ENCODE measurements at regions of chr6 and their contacts with region 1.

Region 1: GRCh38 chr6:24910961-24911712 is 24.6 kb downstream of the RIPOR2 start:
- DNase-seq: peak; percentile 65
- ATAC-seq: peak; percentile 76
- H3K4me3 ChIP-seq: peak overlapping the region; percentile 75
- H3K27ac ChIP-seq: peak overlapping the region; percentile 73
- H3K4me1 ChIP-seq: peaks cover 22% of the 10 kb centered on the region
- H3K27me3 ChIP-seq: peaks cover 5% of the 10 kb centered on the region
- CTCF ChIP-seq: no peak
- POLR2A ChIP-seq: no peak
- RAD21 ChIP-seq: no peak

Region 2: GRCh38 chr6:24899997-24900325 is 11.2 kb before region 1 on chr6:
- CTCF ChIA-PET with region 1: interaction called, 11 read pairs
- POLR2A ChIA-PET with region 1: no interaction called
- dilution Hi-C with region 1: no loop called
- in situ Hi-C with region 1: no loop called
- intact Hi-C with region 1: no loop called
- DNase-seq: no peak
- ATAC-seq: no peak
- H3K4me3 ChIP-seq: no peak overlapping the region
- H3K27ac ChIP-seq: no peak overlapping the region
- H3K4me1 ChIP-seq: peaks cover 9% of the 10 kb centered on the region
- H3K27me3 ChIP-seq: no peaks in the 10 kb centered on the region
- CTCF ChIP-seq: no peak
- POLR2A ChIP-seq: no peak
- RAD21 ChIP-seq: no peak

Region 3: DNA sequence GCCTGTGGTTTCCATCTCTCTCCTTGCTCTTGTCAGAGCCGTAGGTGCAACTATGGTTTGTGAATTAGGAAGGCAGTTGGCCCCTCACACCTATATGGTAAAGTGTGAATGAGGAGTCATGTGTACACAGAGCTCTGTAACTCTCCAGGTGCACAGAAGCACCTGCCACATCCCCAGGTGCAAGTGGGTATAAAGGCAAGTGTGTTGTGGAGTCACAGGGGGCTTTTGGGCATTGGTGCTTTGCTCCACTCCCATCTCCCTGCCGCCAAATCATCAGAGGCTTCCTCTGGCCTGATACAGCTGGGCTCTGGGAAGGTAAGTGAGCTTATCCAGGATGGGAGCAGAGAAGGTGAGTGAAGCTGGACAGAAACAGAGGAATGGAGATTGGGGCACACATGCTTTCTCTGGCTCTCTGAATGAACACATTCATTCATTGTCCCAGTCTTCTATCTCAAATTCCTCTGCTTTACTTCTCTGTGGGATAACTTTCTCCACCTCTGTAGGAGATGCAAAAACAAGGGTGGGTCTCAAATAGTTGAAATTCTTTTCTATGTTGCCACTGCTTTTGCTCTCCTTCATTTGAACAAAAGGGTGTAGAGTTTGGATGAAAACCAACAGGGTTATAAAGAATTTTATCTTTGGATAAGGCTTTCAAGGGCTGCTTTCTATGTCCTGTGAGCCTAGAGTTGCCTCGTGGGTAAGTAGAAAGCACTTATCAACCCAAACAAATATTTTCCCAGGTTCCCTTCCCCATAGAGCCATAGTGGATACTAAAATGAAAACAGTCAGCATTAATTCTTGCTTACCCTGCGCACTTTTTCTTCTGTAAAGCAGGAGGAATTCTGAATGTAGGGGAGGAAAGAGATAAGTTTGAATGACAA is 69.6 kb after region 1 on chr6:
- CTCF ChIA-PET with region 1: no interaction called
- POLR2A ChIA-PET with region 1: no interaction called
- dilution Hi-C with region 1: no loop called
- in situ Hi-C with region 1: no loop called
- intact Hi-C with region 1: loop called (anchors 5 kb)
- DNase-seq: no peak
- ATAC-seq: 0 out of 2 replicates have a peak, but pooled peaks have one; percentile 12
- H3K4me3 ChIP-seq: no peak overlapping the region
- H3K27ac ChIP-seq: no peak overlapping the region; the same call in 1 of the 2 replicates
- H3K4me1 ChIP-seq: peaks cover 15% of the 10 kb centered on the region
- H3K27me3 ChIP-seq: no peaks in the 10 kb centered on the region
- CTCF ChIP-seq: no peak
- POLR2A ChIP-seq: no peak
- RAD21 ChIP-seq: no peak

Region 4: DNA sequence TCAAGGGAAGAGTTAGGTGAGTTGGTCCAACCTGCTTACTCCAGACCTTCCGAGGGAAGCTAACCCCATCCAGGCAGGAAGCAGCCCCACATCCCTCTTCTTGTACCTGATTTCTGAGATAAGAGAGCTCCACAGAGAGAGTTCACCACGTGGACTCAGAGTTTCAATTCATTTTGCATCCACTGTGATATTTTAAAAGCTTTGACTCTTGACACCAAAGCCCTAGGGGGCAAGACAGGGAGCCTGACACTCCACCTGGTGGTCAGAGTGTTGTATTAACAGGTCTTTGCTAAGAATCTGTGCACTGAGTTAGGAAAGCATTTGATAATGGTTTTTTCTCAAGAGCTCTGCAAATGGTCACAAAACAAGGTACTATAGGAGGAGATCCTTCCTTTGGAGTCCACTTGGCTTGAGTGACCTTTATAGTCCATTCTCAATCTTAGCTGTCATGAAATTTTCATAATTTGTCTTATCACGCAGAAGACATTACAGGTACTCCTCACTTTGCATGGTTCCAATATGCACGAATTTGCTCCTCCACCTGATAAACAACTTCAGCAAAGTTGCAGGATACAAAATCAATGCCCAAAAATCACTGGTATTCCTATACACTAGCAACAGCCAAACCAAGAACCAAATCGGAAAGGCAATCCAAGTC is 80.8 kb after region 1 on chr6:
- CTCF ChIA-PET with region 1: interaction called, 16 read pairs
- POLR2A ChIA-PET with region 1: no interaction called
- dilution Hi-C with region 1: no loop called
- in situ Hi-C with region 1: no loop called
- intact Hi-C with region 1: no loop called
- DNase-seq: peak; percentile 48
- ATAC-seq: peak; percentile 74
- H3K4me3 ChIP-seq: no peak overlapping the region
- H3K27ac ChIP-seq: no peak overlapping the region
- H3K4me1 ChIP-seq: peaks cover 3% of the 10 kb centered on the region
- H3K27me3 ChIP-seq: no peaks in the 10 kb centered on the region
- CTCF ChIP-seq: peak; percentile 65
- POLR2A ChIP-seq: no peak
- RAD21 ChIP-seq: peak; percentile 69

Region 5: DNA sequence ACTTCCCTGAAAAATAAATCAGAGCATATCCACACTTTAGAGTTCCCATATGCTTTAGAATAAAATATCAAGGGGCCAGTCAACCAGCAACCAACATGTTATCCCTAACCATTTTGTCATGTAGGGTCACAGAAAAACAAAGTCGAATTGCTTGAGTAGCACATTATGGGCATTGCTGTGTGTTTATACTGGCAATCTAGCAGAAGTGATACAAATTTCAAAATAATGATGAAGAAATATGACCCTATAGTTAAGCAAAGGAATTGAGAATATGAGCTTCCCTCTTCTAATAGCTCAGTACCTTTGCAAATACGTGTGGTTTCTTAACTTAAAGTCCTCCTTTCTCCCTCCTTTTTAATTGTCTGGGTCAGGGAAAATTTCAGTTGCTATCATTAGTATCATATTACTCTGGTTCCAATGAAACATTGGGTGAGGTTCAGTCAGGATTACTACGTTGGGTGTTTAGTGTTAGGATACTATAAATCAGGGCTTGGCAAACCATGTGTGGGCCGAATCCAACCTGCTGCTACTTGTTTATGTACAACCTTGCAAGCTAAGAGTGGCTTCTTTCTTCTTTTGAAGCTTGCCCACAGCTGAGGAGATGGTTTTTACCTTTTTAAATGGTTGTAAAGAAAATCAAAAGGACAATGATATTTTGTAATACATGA is 201.2 kb after region 1 on chr6:
- CTCF ChIA-PET with region 1: no interaction called
- POLR2A ChIA-PET with region 1: no interaction called
- dilution Hi-C with region 1: no loop called
- in situ Hi-C with region 1: no loop called
- intact Hi-C with region 1: no loop called
- DNase-seq: no peak
- ATAC-seq: no peak
- H3K4me3 ChIP-seq: no peak overlapping the region
- H3K27ac ChIP-seq: no peak overlapping the region
- H3K4me1 ChIP-seq: no peaks in the 10 kb centered on the region
- H3K27me3 ChIP-seq: no peaks in the 10 kb centered on the region
- CTCF ChIP-seq: no peak
- POLR2A ChIP-seq: no peak
- RAD21 ChIP-seq: no peak

Measured in IMR-90 (cell line).